OCI-LY7 (cell line): ENCODE measurements at regions of chr14 and their contacts with region 1.

Region 1: GRCh38 chr14:89303457-89304435 is 113.3 kb downstream of the FOXN3 start:
- DNase-seq: peak; percentile 94
- H3K4me3 ChIP-seq: peak overlapping the region; percentile 65
- H3K27ac ChIP-seq: peak overlapping the region; percentile 99
- H3K4me1 ChIP-seq: peaks cover 65% of the 10 kb centered on the region
- CTCF ChIP-seq: no peak

Region 2: DNA sequence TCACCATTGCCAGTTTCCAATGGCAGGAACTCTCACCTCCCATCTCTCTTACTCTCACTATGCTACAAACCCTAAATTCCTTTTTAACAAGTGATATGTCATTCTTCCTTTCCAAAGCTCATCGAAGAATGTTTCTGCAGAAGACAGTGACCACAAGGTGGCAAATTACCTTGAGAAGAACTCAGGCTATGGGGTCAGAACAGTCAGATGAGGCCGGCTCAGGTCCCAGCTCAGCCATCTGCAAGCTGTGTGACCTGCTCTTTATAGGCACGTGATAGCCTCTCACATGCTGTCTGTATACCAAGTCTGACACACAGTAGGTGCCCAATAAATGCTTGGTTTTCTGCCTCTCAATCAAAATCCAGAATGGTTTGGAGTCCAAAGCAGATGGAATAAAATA is 32.6 kb after region 1 on chr14:
- CTCF ChIA-PET with region 1: no interaction called
- POLR2A ChIA-PET with region 1: interaction called, 6 read pairs
- intact Hi-C with region 1: loop called (anchors 2 kb)
- DNase-seq: peak; percentile 82
- H3K4me3 ChIP-seq: no peak overlapping the region
- H3K27ac ChIP-seq: no peak overlapping the region
- H3K4me1 ChIP-seq: peaks cover 83% of the 10 kb centered on the region
- CTCF ChIP-seq: peak; percentile 77

Region 3: DNA sequence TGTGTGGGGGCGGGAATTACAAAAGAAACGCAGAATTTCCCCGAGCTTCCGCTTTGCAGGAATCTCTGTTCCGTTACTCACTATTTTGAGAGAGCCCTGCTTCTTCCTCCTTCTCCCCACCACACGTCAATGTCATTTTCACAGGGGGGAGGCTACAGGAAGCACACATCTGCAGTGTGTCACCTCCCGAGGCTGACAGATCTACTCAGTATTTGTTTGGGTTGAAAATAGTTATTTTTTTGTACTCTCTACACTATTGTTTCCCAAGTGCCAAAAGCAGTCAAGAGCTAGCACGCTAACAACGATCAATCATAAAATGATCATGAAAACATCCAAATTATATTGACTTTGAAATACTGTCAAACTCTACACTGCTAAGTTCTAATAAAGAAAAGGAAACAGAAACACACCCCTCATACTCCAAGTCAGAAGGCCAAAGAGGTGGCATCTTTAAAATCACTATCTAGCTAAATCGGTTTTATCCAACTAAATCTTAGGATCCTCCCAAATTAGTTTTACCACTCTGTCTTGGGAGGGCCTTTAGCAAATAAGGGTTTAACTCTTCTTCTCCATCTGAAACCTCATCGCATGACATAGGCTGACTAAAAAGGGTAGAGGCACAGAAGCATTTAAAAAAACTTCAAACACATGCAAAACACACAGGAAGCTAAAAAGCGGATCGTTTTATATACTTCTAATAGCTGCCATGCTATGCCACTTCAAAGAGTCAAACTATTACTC is 61.5 kb after region 1 on chr14:
- CTCF ChIA-PET with region 1: no interaction called
- POLR2A ChIA-PET with region 1: interaction called, 10 read pairs
- intact Hi-C with region 1: loop called (anchors 2 kb)
- DNase-seq: peak; percentile 82
- H3K4me3 ChIP-seq: peak overlapping the region; percentile 63
- H3K27ac ChIP-seq: peak overlapping the region; percentile 91
- H3K4me1 ChIP-seq: peaks cover 57% of the 10 kb centered on the region
- CTCF ChIP-seq: no peak

Region 4: GRCh38 chr14:89493877-89494634 is 190.3 kb after region 1 on chr14:
- CTCF ChIA-PET with region 1: no interaction called
- POLR2A ChIA-PET with region 1: interaction called, 4 read pairs
- intact Hi-C with region 1: loop called (anchors 10 kb)
- DNase-seq: peak; percentile 88
- H3K4me3 ChIP-seq: peak overlapping the region; percentile 53
- H3K27ac ChIP-seq: peak overlapping the region; percentile 25
- H3K4me1 ChIP-seq: peaks cover 25% of the 10 kb centered on the region
- CTCF ChIP-seq: no peak

Region 5: GRCh38 chr14:89767861-89768268 is 464.1 kb after region 1 on chr14:
- CTCF ChIA-PET with region 1: no interaction called
- POLR2A ChIA-PET with region 1: interaction called, 5 read pairs
- intact Hi-C with region 1: loop called (anchors 2 kb)
- DNase-seq: peak; percentile 81
- H3K4me3 ChIP-seq: no peak overlapping the region
- H3K27ac ChIP-seq: no peak overlapping the region
- H3K4me1 ChIP-seq: peaks cover 37% of the 10 kb centered on the region
- CTCF ChIP-seq: peak; percentile 94